Left lung (tissue), 14 donors: ENCODE measurements at regions of chr3 and their contacts with region 1.

Region 1: DNA sequence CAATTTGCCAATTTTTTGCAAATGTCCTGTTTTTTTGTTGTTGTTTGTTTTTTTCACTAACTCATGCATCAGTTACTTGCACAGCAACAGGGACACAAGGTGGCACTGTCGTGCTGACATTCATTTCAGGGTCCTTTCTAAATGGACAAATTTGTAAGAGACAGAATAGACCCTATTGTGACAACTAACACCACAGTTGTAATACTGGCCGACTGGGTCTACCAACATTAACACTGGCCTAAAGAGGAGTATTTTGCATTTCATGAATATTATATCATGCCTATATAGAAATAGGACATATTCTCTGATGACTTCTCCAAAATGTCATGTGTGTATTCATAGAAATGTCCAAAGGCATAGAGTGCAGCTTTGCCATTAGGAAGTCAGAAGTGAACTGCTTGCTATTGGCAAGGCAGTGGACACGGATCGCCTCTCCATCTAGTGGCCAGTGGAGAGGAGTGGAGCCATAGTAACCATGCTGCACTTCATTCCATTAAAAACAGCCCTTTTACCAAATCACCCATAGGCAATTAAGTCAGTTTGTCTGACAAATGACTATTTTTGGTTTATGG is 54.8 kb downstream of the ZBTB20 start:
- DNase-seq: peak in 3 of 4 donors; percentile 33 to 72 (median 58)
- ATAC-seq: peak; percentile 99
- H3K4me3 ChIP-seq: no peak overlapping the region
- H3K27ac ChIP-seq: no peak overlapping the region
- H3K4me1 ChIP-seq: peaks cover under 1 to 10% of the 10 kb centered on the region in 2 donors
- H3K27me3 ChIP-seq: no peaks in the 10 kb centered on the region
- CTCF ChIP-seq: peak; percentile 40 to 54

Region 2: DNA sequence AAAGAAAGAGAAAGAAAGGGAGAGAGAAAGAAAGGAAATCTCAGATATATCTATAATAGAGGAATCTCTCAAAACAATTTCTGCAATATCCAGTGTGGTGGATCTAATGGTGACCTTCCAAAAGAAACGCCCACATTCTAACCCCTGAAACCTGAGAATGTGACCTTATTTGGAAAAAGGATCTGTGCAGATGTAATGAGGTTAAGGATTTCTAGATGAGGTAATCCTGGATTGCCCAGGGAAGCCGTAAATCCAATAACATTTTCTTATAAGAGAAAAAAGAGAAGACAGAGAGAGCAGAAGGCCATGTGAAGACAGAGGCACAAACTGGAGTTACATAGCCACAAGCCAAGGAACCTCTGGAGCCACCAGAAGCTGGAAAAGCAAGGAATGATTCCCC is 252.8 kb before region 1 on chr3:
- intact Hi-C with region 1: loop called in 1 of 2 experiments (anchors 10 kb)
- DNase-seq: no peak
- ATAC-seq: no peak
- H3K4me3 ChIP-seq: no peak overlapping the region
- H3K27ac ChIP-seq: no peak overlapping the region
- H3K4me1 ChIP-seq: no peaks in the 10 kb centered on the region
- H3K27me3 ChIP-seq: no peaks in the 10 kb centered on the region
- CTCF ChIP-seq: no peak

Region 3: GRCh38 chr3:115147329-115148141 is 55.2 kb after region 1 on chr3:
- intact Hi-C with region 1: loop called in 1 of 2 experiments (anchors 10 kb)
- DNase-seq: peak; percentile 98 to 100 (median 100)
- ATAC-seq: peak; percentile 88
- H3K4me3 ChIP-seq: peak overlapping the region; percentile 77 to 83
- H3K27ac ChIP-seq: peak overlapping the region; percentile 97
- H3K4me1 ChIP-seq: peaks cover 0 to 15% of the 10 kb centered on the region in 2 donors
- H3K27me3 ChIP-seq: no peaks in the 10 kb centered on the region
- CTCF ChIP-seq: no peak